Panc1 (cell line): ENCODE measurements at regions of chr17 and their contacts with region 1.

Region 1: GRCh38 chr17:40922239-40922638 is 15.2 kb downstream of the KRT23 start:
- DNase-seq: no peak
- ATAC-seq: peak; percentile 80
- H3K4me3 ChIP-seq: no peak overlapping the region
- H3K27ac ChIP-seq: no peak overlapping the region
- H3K4me1 ChIP-seq: no peaks in the 10 kb centered on the region
- H3K27me3 ChIP-seq: no peaks in the 10 kb centered on the region; the same call in 1 of the 2 replicates
- CTCF ChIP-seq: no peak

Region 2: GRCh38 chr17:40901981-40902474 is 20.2 kb before region 1 on chr17:
- CTCF ChIA-PET with region 1: no interaction called
- POLR2A ChIA-PET with region 1: interaction called, 11 read pairs
- in situ Hi-C with region 1: no loop called
- intact Hi-C with region 1: no loop called
- DNase-seq: no peak
- ATAC-seq: peak; percentile 62
- H3K4me3 ChIP-seq: no peak overlapping the region
- H3K27ac ChIP-seq: no peak overlapping the region; the same call in 1 of the 2 replicates
- H3K4me1 ChIP-seq: peaks cover 18% of the 10 kb centered on the region
- H3K27me3 ChIP-seq: no peaks in the 10 kb centered on the region
- CTCF ChIP-seq: no peak

Region 3: DNA sequence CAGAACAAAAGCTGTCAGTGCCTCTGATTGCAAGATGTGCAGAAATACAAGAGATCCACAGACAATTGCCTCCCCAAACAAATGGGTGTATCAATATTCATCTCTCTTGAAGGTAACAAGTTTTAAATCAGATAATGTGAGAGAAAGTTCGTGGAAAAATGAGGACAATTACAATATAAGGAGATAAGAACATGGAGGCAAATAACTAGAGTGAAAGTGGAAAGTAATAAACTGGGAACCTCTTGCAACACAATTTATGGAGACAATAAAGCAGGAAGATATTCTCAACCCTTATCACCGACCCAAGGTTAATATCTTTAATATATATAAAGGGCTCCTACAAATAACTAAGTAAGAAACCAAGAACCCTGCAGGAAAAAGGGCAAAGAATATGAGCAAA is 620.1 kb after region 1 on chr17:
- CTCF ChIA-PET with region 1: no interaction called
- POLR2A ChIA-PET with region 1: interaction called, 18 read pairs
- in situ Hi-C with region 1: no loop called
- intact Hi-C with region 1: no loop called
- DNase-seq: no peak
- ATAC-seq: no peak
- H3K4me3 ChIP-seq: no peak overlapping the region
- H3K27ac ChIP-seq: peak overlapping the region; percentile 77; the same call in 1 of the 2 replicates
- H3K4me1 ChIP-seq: peaks cover 51% of the 10 kb centered on the region
- H3K27me3 ChIP-seq: no peaks in the 10 kb centered on the region
- CTCF ChIP-seq: no peak

Region 4: GRCh38 chr17:41688699-41689496 is 766.7 kb after region 1 on chr17 and contains the start of gene EIF1:
- CTCF ChIA-PET with region 1: no interaction called
- POLR2A ChIA-PET with region 1: interaction called, 15 read pairs
- in situ Hi-C with region 1: no loop called
- intact Hi-C with region 1: no loop called
- DNase-seq: peak; percentile 96
- ATAC-seq: peak; percentile 89
- H3K4me3 ChIP-seq: peak within 1 kb of the TSS; percentile 91 to 99
- H3K27ac ChIP-seq: peak within 1 kb of the TSS; percentile 100
- H3K4me1 ChIP-seq: peaks cover 22% of the 10 kb centered on the region
- H3K27me3 ChIP-seq: no peaks in the 10 kb centered on the region
- CTCF ChIP-seq: no peak
- total RNA-seq, gene EIF1: 747 TPM